Mammary epithelial cell (primary cell): ENCODE measurements at regions of chr11 and their contacts with region 1.

Region 1: GRCh38 chr11:117900121-117900648 is 23.7 kb upstream of the FXYD6 start:
- DNase-seq: no peak
- H3K4me3 ChIP-seq: no peak overlapping the region
- H3K27ac ChIP-seq: no peak overlapping the region
- H3K4me1 ChIP-seq: peaks cover 6% of the 10 kb centered on the region
- H3K27me3 ChIP-seq: peaks cover 4% of the 10 kb centered on the region
- CTCF ChIP-seq: no peak

Region 2: DNA sequence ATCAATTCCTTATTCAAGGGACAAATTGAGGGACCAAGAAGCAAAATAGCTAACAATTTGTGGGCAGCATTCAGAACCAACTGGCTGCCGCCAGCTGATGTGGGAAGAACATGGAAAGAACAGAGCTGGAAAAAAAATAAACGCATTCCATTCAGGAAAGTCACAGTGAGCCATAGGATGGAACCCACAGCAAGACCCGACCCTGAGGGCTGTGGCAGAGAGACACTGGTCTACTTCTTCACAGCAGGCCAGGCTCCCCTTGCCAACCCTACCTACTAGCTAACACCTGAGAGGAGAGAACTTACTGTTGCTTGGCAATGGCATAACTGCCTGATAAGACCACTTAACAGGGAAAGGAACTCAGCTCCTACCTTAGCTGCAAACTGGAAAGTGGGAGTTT is 939.3 kb before region 1 on chr11:
- CTCF ChIA-PET with region 1: no interaction called
- dilution Hi-C with region 1: no loop called
- in situ Hi-C with region 1: no loop called
- intact Hi-C with region 1: no loop called
- DNase-seq: peak; percentile 76
- H3K4me3 ChIP-seq: no peak overlapping the region
- H3K27ac ChIP-seq: peak overlapping the region; percentile 53
- H3K4me1 ChIP-seq: peaks cover 29% of the 10 kb centered on the region
- H3K27me3 ChIP-seq: no peaks in the 10 kb centered on the region
- CTCF ChIP-seq: no peak

Region 3: DNA sequence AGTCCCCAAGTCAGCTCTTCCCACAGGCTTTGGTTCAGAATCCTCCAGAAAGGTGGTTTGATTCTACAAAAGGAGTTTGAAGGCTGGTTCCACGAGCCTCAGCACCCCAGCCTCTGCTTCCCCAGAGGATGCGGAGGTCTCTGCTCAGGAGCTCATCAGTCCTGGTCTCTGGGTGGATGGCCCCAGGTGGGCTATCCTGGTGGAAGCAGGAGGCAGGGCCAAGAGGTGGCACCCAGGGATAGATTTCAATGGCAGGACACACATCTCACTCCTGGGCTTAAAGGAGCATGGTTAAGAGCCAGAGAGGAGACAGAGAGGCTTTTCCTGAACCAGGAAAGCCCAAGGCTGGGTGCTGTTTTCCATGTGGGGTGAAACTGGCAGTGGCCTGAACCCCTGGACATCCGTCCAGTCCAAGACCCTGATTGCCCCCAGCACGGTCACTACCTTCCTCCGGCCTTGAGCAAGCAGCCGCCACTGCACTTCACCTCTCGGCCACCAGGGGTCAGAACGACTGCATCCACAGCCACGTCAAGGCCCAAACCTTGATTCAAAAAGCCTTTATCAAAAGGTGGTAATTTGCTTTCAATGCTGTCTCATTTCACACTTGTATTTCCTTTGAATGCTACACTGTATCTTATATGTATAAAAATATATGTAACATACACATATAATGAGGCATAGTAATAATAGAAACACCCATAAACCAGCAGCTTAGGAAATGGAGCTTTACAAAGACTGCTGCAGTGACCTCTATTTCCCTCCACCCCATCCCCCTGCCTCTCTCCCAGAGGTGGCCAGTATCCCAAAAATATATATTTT is 56.3 kb before region 1 on chr11:
- CTCF ChIA-PET with region 1: interaction called, 4 read pairs
- dilution Hi-C with region 1: no loop called
- in situ Hi-C with region 1: no loop called
- intact Hi-C with region 1: loop called (anchors 1 kb)
- DNase-seq: peak; percentile 24
- H3K4me3 ChIP-seq: no peak overlapping the region
- H3K27ac ChIP-seq: no peak overlapping the region
- H3K4me1 ChIP-seq: no peaks in the 10 kb centered on the region
- H3K27me3 ChIP-seq: no peaks in the 10 kb centered on the region
- CTCF ChIP-seq: peak; percentile 94 to 98

Region 4: DNA sequence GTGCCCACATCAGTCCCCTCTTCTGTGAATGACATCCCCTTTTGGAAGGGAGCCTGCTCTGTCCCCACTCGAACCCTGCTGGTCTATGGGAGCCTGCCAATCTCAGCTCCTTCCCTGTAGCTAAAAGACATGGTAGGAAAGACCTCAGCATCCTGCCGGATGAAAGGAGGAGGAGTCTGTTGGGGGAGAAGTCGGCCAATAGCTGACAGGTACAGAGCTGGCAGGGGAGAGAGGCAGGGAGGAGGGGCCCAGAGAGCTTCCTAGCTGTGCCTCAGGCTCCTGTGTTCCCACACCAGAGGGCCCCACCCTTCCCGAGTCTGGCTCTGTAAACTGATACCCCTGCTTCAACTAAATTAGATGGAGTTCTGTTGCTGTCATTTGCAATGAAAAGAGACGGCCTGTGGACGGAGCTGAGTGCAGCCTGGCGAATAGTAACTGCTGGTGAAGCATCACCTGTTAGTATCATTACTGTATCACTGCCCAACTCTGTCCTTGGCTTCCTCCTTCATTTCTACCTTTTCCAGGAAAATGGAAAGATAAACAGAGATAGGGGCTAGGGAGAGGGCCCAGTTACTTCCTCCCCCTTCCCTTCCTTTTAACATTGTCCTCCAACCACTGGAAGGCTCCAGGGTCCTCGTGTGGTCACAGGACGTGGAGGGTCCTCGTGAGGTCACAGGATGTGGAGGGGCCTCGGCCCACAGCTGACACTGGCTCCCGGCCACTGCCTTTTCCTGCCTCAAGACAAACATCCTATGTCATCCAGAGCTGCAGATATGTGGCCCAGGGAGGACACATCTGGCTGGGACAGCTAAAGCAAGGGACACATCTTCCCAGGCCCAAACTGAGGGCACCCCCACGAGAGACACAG is 38.8 kb before region 1 on chr11:
- CTCF ChIA-PET with region 1: no interaction called
- dilution Hi-C with region 1: loop called (anchors 5 kb)
- in situ Hi-C with region 1: no loop called
- intact Hi-C with region 1: no loop called
- DNase-seq: no peak
- H3K4me3 ChIP-seq: no peak overlapping the region
- H3K27ac ChIP-seq: no peak overlapping the region
- H3K4me1 ChIP-seq: no peaks in the 10 kb centered on the region
- H3K27me3 ChIP-seq: no peaks in the 10 kb centered on the region
- CTCF ChIP-seq: no peak

Region 5: DNA sequence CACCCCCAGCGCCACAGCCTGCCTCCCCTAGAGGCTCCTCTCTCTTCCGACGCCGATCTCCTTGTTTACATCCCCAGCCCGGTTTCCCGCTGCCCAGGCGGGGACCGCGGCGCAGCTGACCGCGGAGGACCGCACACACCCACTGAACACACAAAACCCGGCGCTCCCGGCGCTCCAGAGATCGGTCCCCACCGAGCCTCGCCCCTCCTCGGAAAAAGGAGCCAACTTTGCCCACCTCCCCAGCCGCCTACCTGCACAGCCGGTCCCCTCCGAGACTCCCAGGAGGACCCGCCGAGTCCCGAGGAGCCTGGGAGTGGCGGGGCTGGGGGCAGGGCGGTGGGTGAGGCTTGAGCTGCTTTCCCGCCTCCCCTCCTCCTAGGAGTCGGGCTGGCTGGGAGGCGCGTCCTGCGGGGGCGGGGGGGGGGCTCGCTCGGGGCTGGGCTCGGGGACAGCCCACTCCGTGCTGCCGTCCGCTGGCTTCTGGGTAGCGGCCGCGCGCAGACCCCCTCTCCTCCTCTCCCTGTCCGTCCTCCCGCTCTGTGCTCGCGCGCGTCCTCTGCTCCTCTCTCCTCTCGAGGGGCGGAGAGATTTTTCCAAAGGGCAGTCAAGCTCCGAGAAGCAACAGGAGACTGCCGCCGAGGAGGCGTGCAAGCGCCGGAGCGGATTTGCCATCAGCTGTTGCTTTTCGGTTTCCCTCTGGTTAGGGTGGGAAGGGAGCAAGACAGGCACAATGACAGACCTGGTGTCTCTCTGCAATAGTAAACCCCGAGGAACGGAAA is 23.7 kb before region 1 on chr11 and contains the start of gene FXYD6:
- CTCF ChIA-PET with region 1: no interaction called
- dilution Hi-C with region 1: no loop called
- in situ Hi-C with region 1: no loop called
- intact Hi-C with region 1: no loop called
- DNase-seq: no peak
- H3K4me3 ChIP-seq: peak within 1 kb of the TSS; percentile 25 to 33 (median 31)
- H3K27ac ChIP-seq: no peak within 1 kb of the TSS
- H3K4me1 ChIP-seq: peaks cover 10% of the 10 kb centered on the region
- H3K27me3 ChIP-seq: peaks cover 22% of the 10 kb centered on the region
- CTCF ChIP-seq: no peak
- total RNA-seq, gene FXYD6: 0.21 TPM in 1 of 2 donors, not detected in the other

Region 6: GRCh38 chr11:117959438-117960149 is 59.4 kb after region 1 on chr11:
- CTCF ChIA-PET with region 1: no interaction called
- dilution Hi-C with region 1: loop called (anchors 5 kb)
- in situ Hi-C with region 1: no loop called
- intact Hi-C with region 1: no loop called
- DNase-seq: no peak
- H3K4me3 ChIP-seq: no peak overlapping the region
- H3K27ac ChIP-seq: no peak overlapping the region
- H3K4me1 ChIP-seq: no peaks in the 10 kb centered on the region
- H3K27me3 ChIP-seq: no peaks in the 10 kb centered on the region
- CTCF ChIP-seq: no peak

Region 7: GRCh38 chr11:118098996-118099837 is 199.0 kb after region 1 on chr11:
- CTCF ChIA-PET with region 1: no interaction called
- dilution Hi-C with region 1: no loop called
- in situ Hi-C with region 1: no loop called
- intact Hi-C with region 1: no loop called
- DNase-seq: no peak
- H3K4me3 ChIP-seq: no peak overlapping the region
- H3K27ac ChIP-seq: no peak overlapping the region
- H3K4me1 ChIP-seq: no peaks in the 10 kb centered on the region
- H3K27me3 ChIP-seq: no peaks in the 10 kb centered on the region
- CTCF ChIP-seq: no peak